PC-3 (cell line): ENCODE measurements at regions of chr12 and their contacts with region 1.

Region 1: GRCh38 chr12:95412482-95413311 is 61.3 kb upstream of the METAP2 start:
- DNase-seq: peak; percentile 92
- ATAC-seq: peak; percentile 84
- H3K4me3 ChIP-seq: no peak overlapping the region
- H3K27ac ChIP-seq: peak overlapping the region; percentile 81
- H3K4me1 ChIP-seq: peaks cover 14% of the 10 kb centered on the region
- H3K27me3 ChIP-seq: no peaks in the 10 kb centered on the region
- CTCF ChIP-seq: no peak

Region 2: GRCh38 chr12:94875525-94875924 is 537.2 kb before region 1 on chr12:
- CTCF ChIA-PET with region 1: no interaction called
- POLR2A ChIA-PET with region 1: no interaction called
- intact Hi-C with region 1: no loop called
- DNase-seq: peak; percentile 58
- ATAC-seq: peak; percentile 45
- H3K4me3 ChIP-seq: no peak overlapping the region
- H3K27ac ChIP-seq: no peak overlapping the region
- H3K4me1 ChIP-seq: no peaks in the 10 kb centered on the region
- H3K27me3 ChIP-seq: peaks cover 58% of the 10 kb centered on the region
- CTCF ChIP-seq: peak; percentile 57

Region 3: DNA sequence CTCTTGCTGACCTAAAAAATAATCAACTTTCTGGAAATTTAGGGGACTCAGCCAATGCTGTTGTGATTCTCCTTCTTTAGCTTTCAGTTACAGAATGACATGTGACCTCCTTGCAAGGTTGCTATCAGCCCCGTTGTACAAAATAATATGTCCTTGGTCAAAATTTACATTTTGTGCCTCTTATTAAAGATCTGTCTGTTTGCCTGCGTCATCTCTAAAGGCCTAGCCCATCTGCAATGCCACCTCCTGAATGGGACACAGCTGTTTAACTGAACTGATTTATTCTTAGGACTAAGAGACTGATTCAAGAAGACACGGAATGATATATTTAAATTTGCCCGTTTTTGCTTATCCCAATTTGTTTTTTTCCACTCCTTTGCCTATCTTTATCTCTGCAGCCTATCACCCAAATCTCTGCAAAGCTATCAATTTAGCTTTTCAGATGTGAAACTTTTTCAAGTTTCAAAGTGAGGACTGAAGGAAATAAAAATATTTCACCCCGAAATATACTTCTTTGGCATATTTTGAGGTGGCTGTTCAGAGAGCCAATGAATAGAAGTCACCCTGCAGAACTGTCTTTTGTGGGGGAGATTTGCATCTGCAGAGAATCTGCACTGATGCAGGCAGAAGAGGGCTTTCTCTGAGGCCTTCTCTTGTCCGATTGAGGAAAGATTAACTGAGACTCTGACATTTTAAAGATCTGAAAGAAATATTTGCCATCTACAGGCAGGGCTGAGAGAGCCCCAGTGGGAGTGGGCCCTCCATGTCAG is 69.1 kb before region 1 on chr12:
- CTCF ChIA-PET with region 1: no interaction called
- POLR2A ChIA-PET with region 1: no interaction called
- intact Hi-C with region 1: loop called (anchors 5 kb)
- DNase-seq: no peak
- ATAC-seq: no peak
- H3K4me3 ChIP-seq: no peak overlapping the region
- H3K27ac ChIP-seq: no peak overlapping the region
- H3K4me1 ChIP-seq: peaks cover 20% of the 10 kb centered on the region
- H3K27me3 ChIP-seq: no peaks in the 10 kb centered on the region
- CTCF ChIP-seq: no peak

Region 4: DNA sequence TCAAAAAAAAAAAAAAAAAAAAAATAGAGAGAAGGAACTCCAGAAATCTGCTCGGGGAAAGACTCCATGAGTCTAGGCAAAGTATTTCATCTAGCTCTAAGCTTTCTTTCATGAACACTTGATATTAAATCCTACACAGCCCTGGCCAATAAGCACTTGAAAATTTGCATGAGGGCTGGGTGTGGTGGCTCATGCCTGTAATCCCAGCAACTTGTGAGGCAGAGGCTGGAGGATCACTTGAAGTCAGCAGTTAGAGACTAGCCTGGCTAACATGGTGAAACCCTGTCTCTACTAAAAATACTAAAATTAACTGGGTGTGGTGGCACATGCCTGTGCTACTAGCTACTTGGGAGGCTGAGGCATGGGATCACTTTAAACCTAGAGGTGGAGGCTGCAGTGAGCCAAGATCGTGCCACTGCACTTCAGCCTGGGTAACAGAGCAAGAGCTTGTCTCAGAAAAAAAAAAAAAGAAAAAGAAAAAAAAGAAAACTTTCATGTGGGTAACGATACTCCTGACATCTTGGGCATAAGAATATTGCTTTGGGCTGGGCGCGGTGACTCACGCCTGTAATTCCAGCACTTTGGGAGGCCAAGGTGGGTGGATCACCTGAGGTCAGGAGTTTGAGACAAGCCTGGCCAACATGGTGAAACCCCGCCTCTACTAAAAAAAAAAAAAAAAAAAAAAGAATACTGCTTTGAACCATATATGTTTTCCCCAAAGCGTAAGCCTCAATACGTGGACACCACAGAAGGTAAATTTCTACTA is 48.4 kb after region 1 on chr12:
- CTCF ChIA-PET with region 1: no interaction called
- POLR2A ChIA-PET with region 1: no interaction called
- intact Hi-C with region 1: no loop called
- DNase-seq: no peak
- ATAC-seq: no peak
- H3K4me3 ChIP-seq: no peak overlapping the region
- H3K27ac ChIP-seq: no peak overlapping the region
- H3K4me1 ChIP-seq: no peaks in the 10 kb centered on the region
- H3K27me3 ChIP-seq: no peaks in the 10 kb centered on the region
- CTCF ChIP-seq: no peak

Region 5: DNA sequence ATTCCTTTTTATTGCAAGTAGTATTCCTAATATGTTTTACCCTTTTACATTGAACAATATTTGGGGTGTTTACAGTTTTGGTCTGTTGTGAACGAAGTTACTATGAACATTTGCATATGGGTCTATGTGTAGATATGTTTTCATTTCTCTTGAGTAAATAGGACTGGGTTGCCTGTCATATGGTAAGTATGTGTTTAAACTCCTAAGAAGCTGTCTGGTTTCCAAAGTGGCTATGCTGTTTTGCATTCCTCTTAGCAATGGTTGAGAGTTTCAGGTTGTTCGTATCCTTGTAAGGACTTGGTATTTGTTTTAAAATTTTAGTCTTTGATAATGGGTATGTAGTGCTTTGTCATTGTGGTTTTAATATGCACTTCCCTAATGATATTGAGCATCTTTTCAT is 67.5 kb after region 1 on chr12:
- CTCF ChIA-PET with region 1: no interaction called
- POLR2A ChIA-PET with region 1: no interaction called
- intact Hi-C with region 1: loop called (anchors 2 kb)
- DNase-seq: peak; percentile 29
- ATAC-seq: peak; percentile 54
- H3K4me3 ChIP-seq: no peak overlapping the region
- H3K27ac ChIP-seq: no peak overlapping the region
- H3K4me1 ChIP-seq: peaks cover 20% of the 10 kb centered on the region; the same call in 1 of the 2 replicates
- H3K27me3 ChIP-seq: no peaks in the 10 kb centered on the region
- CTCF ChIP-seq: no peak

Region 6: DNA sequence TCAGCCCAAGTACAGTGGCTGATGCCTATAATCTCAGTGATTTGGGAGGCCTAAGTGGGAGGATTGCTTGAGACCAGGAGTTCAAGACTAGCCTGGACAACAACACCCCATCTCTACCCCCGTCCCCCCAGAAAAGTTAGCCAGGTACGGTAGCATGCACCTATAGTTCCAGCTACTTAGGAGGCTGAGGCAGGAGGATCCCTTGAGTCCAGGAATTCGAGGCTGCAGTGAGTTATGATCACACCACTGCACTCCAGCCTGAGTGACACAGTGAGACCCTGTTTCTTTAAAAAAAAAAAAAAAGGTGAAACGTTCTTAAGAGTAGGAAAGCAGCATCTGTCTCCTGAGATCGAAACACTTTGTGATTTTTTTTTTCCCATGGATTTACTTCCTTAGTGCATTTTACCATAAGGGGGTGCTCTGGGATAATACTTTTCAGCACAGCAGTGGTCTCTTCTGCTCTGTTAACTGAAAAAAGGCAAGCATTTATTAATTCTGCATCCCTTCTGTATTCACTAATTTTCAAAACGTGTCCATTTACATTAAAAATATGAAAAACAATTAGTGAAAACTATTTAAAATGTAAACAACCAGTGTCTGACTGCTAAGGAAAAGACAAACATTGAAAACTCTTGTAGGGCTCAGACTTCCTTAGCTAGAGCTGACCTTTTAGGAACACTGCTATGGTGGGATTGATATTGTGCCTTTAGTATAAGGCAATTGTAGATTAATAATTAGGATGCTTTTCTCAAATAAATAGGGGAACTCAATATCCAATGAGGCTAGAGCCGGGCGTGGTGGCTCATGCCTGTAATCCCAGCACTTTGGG is 169.7 kb after region 1 on chr12:
- CTCF ChIA-PET with region 1: no interaction called
- POLR2A ChIA-PET with region 1: no interaction called
- intact Hi-C with region 1: no loop called
- DNase-seq: peak; percentile 71
- ATAC-seq: peak; percentile 81
- H3K4me3 ChIP-seq: no peak overlapping the region
- H3K27ac ChIP-seq: no peak overlapping the region
- H3K4me1 ChIP-seq: no peaks in the 10 kb centered on the region
- H3K27me3 ChIP-seq: no peaks in the 10 kb centered on the region
- CTCF ChIP-seq: peak; percentile 82